Prostate gland (tissue), 2 donors: ENCODE measurements at regions of chr11 and their contacts with region 1.

Region 1: DNA sequence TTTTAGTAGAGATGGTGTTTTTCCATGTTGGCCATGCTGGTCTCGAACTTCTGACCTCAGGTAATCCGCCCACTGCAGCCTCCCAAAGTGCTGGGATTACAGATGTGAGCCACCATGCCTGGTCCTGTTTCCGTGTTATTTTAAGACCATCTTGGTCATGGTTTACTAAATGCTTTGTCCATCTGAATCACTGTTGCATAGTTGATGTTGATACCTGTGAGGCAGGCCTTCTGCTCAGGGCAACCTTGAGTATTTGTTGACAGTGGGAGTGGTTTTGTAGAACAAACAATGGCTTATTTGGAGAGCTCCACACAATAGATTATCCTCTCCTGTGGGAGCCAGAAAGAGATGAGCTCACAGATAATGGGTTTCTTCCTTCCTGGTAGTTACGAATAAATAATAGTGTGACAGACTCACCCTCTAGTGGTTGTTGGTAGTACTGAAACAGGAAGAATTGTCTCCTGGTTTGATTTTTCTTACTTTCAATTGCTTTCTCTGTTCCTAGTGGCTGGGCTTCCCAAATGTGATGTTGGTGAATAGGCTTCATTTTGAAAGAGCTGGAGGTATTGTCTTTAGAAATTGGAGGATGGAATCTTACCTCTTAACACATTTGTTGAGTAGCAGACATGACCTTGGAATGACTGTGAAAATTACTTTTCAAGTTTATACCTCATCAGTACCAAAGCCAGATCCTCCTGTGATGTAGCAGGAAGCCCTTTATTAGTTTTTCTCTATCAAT is 39.0 kb downstream of the CTNND1 start:
- DNase-seq: peak; percentile 78
- H3K4me3 ChIP-seq: no peak overlapping the region
- H3K27ac ChIP-seq: peak overlapping the region; percentile 67 to 79
- H3K4me1 ChIP-seq: peaks cover 13% of the 10 kb centered on the region
- H3K27me3 ChIP-seq: no peaks in the 10 kb centered on the region
- CTCF ChIP-seq: peak; percentile 80 to 98 (median 95)
- POLR2A ChIP-seq: peak; percentile 25

Region 2: GRCh38 chr11:57746920-57747319 is 53.7 kb before region 1 on chr11:
- intact Hi-C with region 1: loop called (anchors 5 kb)
- DNase-seq: no peak
- H3K4me3 ChIP-seq: no peak overlapping the region
- H3K27ac ChIP-seq: no peak overlapping the region
- H3K4me1 ChIP-seq: no peaks in the 10 kb centered on the region
- H3K27me3 ChIP-seq: no peaks in the 10 kb centered on the region
- CTCF ChIP-seq: no peak
- POLR2A ChIP-seq: no peak

Region 3: GRCh38 chr11:57761301-57762234 is 39.0 kb before region 1 on chr11 and contains the start of gene CTNND1:
- intact Hi-C with region 1: loop called (anchors 5 kb)
- DNase-seq: peak; percentile 94
- H3K4me3 ChIP-seq: peak within 1 kb of the TSS; percentile 46 to 69
- H3K27ac ChIP-seq: peak within 1 kb of the TSS; percentile 92 to 97
- H3K4me1 ChIP-seq: peaks cover 8% of the 10 kb centered on the region
- H3K27me3 ChIP-seq: no peaks in the 10 kb centered on the region
- CTCF ChIP-seq: peak in 1 of 4 experiments; percentile 25
- POLR2A ChIP-seq: peak; percentile 93
- total RNA-seq, gene CTNND1: 189 to 223 TPM

Region 4: DNA sequence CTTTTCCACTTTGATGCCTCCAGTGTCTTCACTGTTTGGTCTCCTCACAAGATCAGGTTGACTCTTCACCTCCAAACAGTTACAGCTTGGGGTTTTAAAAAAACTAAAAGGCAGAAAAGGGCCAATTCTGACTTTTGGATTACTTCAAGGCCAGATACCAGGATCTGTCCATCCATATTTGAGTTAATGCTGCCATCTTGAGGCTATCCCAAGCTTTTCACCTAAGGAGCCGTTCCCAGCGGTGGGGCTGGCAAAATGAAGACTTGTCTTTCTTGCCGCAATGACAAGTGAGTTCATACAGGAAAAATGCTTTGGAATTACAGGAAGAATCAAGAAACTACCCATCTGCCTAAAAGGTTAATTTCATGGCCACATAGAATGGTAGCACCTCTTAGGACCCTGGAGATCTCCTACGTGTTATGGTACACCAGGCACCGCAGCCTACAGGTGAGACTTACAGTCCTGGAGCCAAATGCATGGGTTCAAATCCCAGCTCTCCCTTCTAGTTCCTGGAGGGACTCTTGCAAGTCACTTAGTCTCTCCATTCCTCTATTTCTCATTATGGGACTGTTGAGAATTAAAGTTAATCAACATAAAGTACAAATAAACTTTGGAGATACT is 713.2 kb after region 1 on chr11:
- intact Hi-C with region 1: loop called (anchors 10 kb)
- DNase-seq: peak; percentile 30
- H3K4me3 ChIP-seq: no peak overlapping the region
- H3K27ac ChIP-seq: no peak overlapping the region
- H3K4me1 ChIP-seq: no peaks in the 10 kb centered on the region
- H3K27me3 ChIP-seq: no peaks in the 10 kb centered on the region
- CTCF ChIP-seq: peak in 3 of 4 experiments; percentile 38 to 59 (median 53)
- POLR2A ChIP-seq: no peak